HEK293T (cell line): ENCODE measurements at regions of chr10 and their contacts with region 1.

Region 1: GRCh38 chr10:116796910-116797513 is 52.3 kb upstream of the ENO4 start:
- DNase-seq: peak; percentile 87

Region 2: GRCh38 chr10:117167789-117168674 is 371.0 kb after region 1 on chr10:
- CTCF ChIA-PET with region 1: interaction called, 18 read pairs
- POLR2A ChIA-PET with region 1: no interaction called
- DNase-seq: peak; percentile 90

Region 3: DNA sequence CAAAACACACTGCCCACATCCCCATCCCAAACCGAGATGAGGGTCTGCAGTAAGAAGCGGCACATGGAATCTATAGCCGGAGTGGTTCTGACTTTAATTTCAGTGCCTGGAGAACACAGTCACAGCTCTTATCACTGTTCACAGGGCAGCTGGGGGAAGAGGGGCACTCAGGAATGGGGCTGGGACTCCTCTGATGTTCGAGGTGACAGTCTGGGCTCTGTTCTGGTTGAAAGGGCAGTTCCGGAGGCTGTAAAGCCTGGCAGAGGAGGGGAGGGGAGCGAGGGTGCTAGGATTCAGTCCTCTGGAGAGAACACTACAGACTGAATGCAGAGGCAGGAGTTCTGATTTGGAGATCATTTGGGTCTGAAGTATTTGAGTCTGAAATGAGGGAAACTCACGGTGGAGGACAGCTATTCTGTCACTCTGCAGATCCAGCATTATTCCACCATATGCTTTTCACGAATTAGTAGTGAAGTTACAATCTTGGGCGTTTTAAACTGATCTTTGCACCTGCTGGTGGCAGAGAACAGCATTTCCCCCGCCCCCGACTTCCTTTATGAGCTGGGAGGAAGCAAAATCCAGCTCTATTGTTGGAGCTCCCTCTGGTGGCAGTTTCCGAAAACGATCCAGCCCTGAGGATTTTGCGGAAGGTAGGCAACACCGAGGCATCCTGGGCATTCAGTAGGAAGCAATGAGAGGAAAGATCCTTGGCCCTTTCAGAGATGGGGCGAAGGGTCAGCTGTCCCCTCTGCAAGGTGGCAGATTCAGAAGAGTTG is 377.6 kb after region 1 on chr10:
- CTCF ChIA-PET with region 1: interaction called, 43 read pairs
- POLR2A ChIA-PET with region 1: interaction called, 4 read pairs
- DNase-seq: peak; percentile 84